ENCODE measurements at regions of chr2 and their contacts with region 1.

Region 1: DNA sequence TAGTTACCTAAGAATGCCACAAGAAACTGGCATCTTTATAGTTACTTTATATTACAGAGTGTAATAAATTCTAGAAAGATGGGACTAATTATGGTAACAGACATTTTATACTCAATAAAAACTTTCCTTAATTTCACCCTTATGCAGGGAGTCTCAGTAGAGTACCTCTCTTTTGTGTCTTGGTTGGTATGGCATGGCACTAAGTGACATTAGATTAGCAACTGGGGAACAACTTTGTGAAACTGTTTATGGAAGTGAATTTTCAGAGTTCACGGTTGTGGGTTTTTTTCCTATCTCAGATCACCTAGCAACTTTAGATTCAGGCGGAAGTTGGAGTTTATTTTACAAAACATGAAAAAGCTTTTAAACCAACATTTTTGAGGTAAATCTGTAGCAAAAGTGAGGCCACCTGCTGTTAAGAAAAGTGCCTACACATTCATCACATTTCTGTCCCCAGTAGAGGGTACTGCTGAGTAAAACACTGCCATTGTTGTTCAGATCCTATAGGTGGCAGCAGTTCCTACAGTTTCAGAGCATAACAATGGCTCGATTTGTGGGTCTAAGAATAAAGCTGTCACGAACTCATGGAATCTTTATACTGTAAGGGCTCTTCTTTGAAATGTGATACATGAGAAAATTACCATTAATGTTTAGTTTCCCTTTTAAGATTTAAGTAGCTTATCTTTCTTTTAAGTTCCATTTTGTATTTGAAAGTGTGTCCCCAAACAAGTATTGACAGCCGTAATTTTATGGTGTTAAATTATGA is 117.6 kb downstream of the CAMKMT start:
- DNase-seq: peak; percentile 64 to 80 (median 70)
- ATAC-seq: peak; percentile 99
- H3K4me3 ChIP-seq: no peak overlapping the region
- H3K27ac ChIP-seq: no peak overlapping the region
- H3K4me1 ChIP-seq: no peaks in the 10 kb centered on the region
- H3K27me3 ChIP-seq: no peaks in the 10 kb centered on the region
- CTCF ChIP-seq: peak; percentile 100
- EP300 ChIP-seq: 0 out of 2 replicates have a peak, but pooled peaks have one; percentile 15
- POLR2A ChIP-seq: no peak
- RAD21 ChIP-seq: peak; percentile 97 to 98

Region 2: GRCh38 chr2:43872151-43872550 is 607.2 kb before region 1 on chr2:
- CTCF ChIA-PET with region 1: no interaction called
- POLR2A ChIA-PET with region 1: no interaction called
- in situ Hi-C with region 1: no loop called
- intact Hi-C with region 1: loop called (anchors 10 kb)
- DNase-seq: no peak
- ATAC-seq: no peak
- H3K4me3 ChIP-seq: no peak overlapping the region
- H3K27ac ChIP-seq: no peak overlapping the region
- H3K4me1 ChIP-seq: no peaks in the 10 kb centered on the region
- H3K27me3 ChIP-seq: peaks cover 25 to 44% of the 10 kb centered on the region in 2 experiments; a peak in 4 of 5 replicates
- CTCF ChIP-seq: no peak
- EP300 ChIP-seq: no peak
- POLR2A ChIP-seq: no peak
- RAD21 ChIP-seq: no peak

Region 3: GRCh38 chr2:44348400-44348799 is 130.9 kb before region 1 on chr2:
- CTCF ChIA-PET with region 1: no interaction called
- POLR2A ChIA-PET with region 1: no interaction called
- in situ Hi-C with region 1: no loop called
- intact Hi-C with region 1: no loop called
- DNase-seq: no peak
- ATAC-seq: no peak
- H3K4me3 ChIP-seq: no peak overlapping the region
- H3K27ac ChIP-seq: no peak overlapping the region
- H3K4me1 ChIP-seq: no peaks in the 10 kb centered on the region
- H3K27me3 ChIP-seq: no peaks in the 10 kb centered on the region
- CTCF ChIP-seq: no peak
- EP300 ChIP-seq: no peak
- POLR2A ChIP-seq: no peak
- RAD21 ChIP-seq: no peak

Region 4: GRCh38 chr2:44392338-44392943 is 86.9 kb before region 1 on chr2:
- CTCF ChIA-PET with region 1: interaction called, 18 read pairs
- POLR2A ChIA-PET with region 1: no interaction called
- in situ Hi-C with region 1: no loop called
- intact Hi-C with region 1: loop called (anchors 2 kb)
- DNase-seq: peak in 3 of 4 experiments; percentile 8 to 57 (median 13)
- ATAC-seq: no peak
- H3K4me3 ChIP-seq: no peak overlapping the region
- H3K27ac ChIP-seq: no peak overlapping the region
- H3K4me1 ChIP-seq: no peaks in the 10 kb centered on the region; a peak in 1 of 5 replicates
- H3K27me3 ChIP-seq: no peaks in the 10 kb centered on the region
- CTCF ChIP-seq: peak in 2 of 3 experiments; percentile 63 to 71; a peak in 4 of 6 replicates
- EP300 ChIP-seq: no peak
- POLR2A ChIP-seq: no peak
- RAD21 ChIP-seq: peak; percentile 34 to 52

Region 5: GRCh38 chr2:44572196-44572900 is 93.0 kb after region 1 on chr2:
- CTCF ChIA-PET with region 1: no interaction called
- POLR2A ChIA-PET with region 1: no interaction called
- in situ Hi-C with region 1: no loop called
- intact Hi-C with region 1: no loop called
- DNase-seq: no peak
- ATAC-seq: no peak
- H3K4me3 ChIP-seq: no peak overlapping the region
- H3K27ac ChIP-seq: no peak overlapping the region
- H3K4me1 ChIP-seq: no peaks in the 10 kb centered on the region
- H3K27me3 ChIP-seq: no peaks in the 10 kb centered on the region
- CTCF ChIP-seq: no peak
- EP300 ChIP-seq: no peak
- POLR2A ChIP-seq: no peak
- RAD21 ChIP-seq: no peak

Region 6: DNA sequence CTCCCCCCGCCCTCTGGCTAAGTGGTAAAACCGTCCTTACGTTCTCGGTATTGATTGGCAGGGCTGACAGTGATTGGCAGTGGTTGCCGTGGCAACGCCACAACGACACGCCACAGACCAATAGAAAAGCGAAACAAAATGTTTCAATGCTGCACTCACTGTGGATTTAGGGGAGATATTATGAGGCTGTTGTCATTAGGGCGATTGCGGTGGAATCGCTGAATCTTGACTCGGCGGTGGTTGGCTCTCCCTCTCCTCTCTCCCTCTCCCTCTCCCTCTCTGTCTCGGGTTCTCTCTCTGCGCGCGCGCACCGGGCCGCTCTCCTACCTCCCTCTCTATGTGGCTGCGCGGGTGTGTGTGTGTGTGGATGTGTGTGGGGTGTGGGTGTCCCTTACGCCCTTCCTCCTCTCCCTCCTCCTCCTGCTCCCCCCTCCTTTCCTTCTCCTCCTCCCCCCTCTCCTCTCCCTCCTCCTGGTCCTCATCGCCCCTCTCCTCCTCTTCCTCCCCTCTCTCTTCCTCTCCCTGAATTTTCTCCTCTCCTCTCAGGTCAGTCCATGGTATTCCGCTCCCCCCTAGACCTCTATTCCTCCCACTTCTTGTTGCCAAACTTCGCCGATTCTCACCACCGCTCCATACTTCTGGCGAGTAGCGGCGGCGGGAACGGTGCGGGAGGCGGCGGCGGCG is 462.4 kb after region 1 on chr2 and contains the start of gene SIX3:
- CTCF ChIA-PET with region 1: no interaction called
- POLR2A ChIA-PET with region 1: no interaction called
- in situ Hi-C with region 1: loop called (anchors 10 kb)
- intact Hi-C with region 1: no loop called
- DNase-seq: no peak
- ATAC-seq: no peak
- H3K4me3 ChIP-seq: no peak within 1 kb of the TSS
- H3K27ac ChIP-seq: no peak within 1 kb of the TSS
- H3K4me1 ChIP-seq: peaks cover 0 to 16% of the 10 kb centered on the region in 2 experiments; a peak in 3 of 5 replicates
- H3K27me3 ChIP-seq: peaks cover 30 to 81% of the 10 kb centered on the region in 2 experiments; a peak in 3 of 5 replicates
- CTCF ChIP-seq: no peak
- EP300 ChIP-seq: no peak
- POLR2A ChIP-seq: no peak
- RAD21 ChIP-seq: no peak
- polyA plus RNA-seq, gene SIX3: not detected

Region 7: GRCh38 chr2:45494269-45494977 is 1015.1 kb after region 1 on chr2:
- CTCF ChIA-PET with region 1: interaction called, 10 read pairs
- POLR2A ChIA-PET with region 1: no interaction called
- in situ Hi-C with region 1: no loop called
- intact Hi-C with region 1: no loop called
- DNase-seq: peak; percentile 20 to 64 (median 25)
- ATAC-seq: peak; percentile 49; the same call in 1 of the 3 replicates
- H3K4me3 ChIP-seq: no peak overlapping the region
- H3K27ac ChIP-seq: no peak overlapping the region
- H3K4me1 ChIP-seq: no peaks in the 10 kb centered on the region
- H3K27me3 ChIP-seq: no peaks in the 10 kb centered on the region
- CTCF ChIP-seq: peak; percentile 49 to 82 (median 56); a peak in 5 of 6 replicates
- EP300 ChIP-seq: no peak
- POLR2A ChIP-seq: no peak
- RAD21 ChIP-seq: peak; percentile 78 to 83

Measured in K562 (cell line).